AG04449 (cell line): ENCODE measurements at regions of chr19 and their contacts with region 1.

Region 1: DNA sequence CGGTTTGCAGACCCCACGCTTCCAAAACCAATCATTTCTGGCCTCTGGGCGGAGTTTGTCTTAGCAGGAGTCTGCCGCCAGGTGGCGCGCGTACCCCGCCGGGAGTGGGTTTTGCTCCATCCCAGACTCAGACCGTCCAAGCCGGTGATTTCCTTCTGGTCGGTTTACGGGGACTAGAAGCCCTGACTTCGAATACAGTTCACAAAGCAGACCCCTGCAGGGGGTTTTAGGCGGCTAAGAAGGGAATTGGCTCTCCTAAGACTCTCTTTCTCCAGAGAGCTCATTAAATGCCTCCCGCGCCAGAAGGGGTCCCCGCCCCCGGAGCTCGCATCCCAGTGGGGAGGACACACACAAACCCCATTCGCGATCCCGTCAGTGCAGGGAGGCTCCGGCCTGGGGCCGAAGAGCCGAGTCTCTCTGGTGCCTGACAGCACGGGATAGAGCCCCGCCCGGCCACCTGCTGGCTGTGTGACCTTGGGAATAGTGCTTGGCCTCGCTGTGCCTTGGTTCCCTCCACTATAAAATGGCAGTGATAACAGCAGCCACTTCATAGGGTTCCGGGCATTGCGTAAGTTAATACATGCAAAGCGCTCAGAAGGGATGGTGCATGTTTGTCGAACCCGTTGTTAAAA is 8.6 kb upstream of the NUP62 start:
- DNase-seq: no peak
- H3K4me3 ChIP-seq: peak overlapping the region; percentile 38
- CTCF ChIP-seq: peak; percentile 96

Region 2: GRCh38 chr19:49877020-49877878 is 60.6 kb before region 1 on chr19 and contains the starts of genes AKT1S1 and TBC1D17:
- CTCF ChIA-PET with region 1: no interaction called
- POLR2A ChIA-PET with region 1: no interaction called
- DNase-seq: peak; percentile 100
- H3K4me3 ChIP-seq: peak within 1 kb of the TSS; percentile 100
- CTCF ChIP-seq: no peak

Region 3: GRCh38 chr19:49954079-49954829 is 16.4 kb after region 1 on chr19:
- CTCF ChIA-PET with region 1: interaction called, 32 read pairs
- POLR2A ChIA-PET with region 1: no interaction called
- DNase-seq: no peak
- H3K4me3 ChIP-seq: peak overlapping the region; percentile 6; the same call in 1 of the 2 replicates
- CTCF ChIP-seq: no peak

Region 4: DNA sequence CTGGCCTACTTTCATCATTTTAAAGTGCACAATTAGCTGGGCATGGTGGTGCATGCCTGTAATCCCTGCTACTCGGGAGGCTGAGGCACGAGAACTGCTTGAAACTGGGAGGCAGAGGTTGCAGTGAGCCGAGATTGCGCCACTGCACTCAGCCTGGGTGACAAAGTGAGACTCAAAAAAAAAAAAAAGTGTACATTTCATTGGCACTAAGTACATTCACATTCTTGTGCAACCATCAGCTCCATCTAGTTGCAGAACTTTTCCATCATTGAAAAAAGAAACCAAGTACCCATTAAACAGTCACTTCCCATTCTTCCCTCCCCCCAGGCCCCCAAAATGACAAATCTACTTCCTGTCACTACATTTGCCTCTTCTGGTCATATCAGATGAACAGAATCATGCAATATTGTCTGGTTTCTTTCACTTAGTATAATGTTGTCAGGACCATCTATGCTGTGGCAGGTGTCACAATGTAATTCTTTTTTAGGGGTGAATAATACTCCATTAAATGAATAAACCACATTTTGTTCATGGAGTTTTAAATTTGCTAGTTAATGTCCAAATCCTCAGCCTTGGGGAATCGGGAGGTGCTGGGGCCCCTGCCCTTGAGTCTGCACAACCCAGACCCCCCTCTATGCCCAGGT is 30.5 kb after region 1 on chr19:
- CTCF ChIA-PET with region 1: interaction called, 12 read pairs
- POLR2A ChIA-PET with region 1: no interaction called
- DNase-seq: no peak
- H3K4me3 ChIP-seq: no peak overlapping the region
- CTCF ChIP-seq: no peak

Region 5: DNA sequence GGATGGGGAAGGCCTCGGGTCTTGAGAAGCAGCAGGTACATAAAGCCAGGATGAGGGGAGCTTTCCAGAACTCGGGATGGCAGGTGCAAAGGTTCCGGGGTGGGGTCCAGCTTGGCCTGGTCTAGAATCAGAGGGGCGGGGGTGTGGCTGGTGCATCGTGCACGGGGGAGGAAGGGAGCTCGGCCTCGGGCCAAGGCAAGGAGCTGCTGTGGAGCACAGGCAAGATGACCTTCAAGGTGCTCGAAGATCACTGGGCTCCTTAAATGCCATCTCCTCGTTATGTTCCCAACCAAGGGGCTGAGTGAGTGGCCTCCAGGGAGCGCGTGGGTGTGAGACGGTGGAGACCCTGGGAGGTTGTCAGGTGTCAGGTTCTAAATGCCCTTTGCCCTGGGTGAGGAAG is 39.2 kb after region 1 on chr19:
- CTCF ChIA-PET with region 1: interaction called, 72 read pairs
- POLR2A ChIA-PET with region 1: no interaction called
- DNase-seq: no peak
- H3K4me3 ChIP-seq: no peak overlapping the region
- CTCF ChIP-seq: no peak

Region 6: DNA sequence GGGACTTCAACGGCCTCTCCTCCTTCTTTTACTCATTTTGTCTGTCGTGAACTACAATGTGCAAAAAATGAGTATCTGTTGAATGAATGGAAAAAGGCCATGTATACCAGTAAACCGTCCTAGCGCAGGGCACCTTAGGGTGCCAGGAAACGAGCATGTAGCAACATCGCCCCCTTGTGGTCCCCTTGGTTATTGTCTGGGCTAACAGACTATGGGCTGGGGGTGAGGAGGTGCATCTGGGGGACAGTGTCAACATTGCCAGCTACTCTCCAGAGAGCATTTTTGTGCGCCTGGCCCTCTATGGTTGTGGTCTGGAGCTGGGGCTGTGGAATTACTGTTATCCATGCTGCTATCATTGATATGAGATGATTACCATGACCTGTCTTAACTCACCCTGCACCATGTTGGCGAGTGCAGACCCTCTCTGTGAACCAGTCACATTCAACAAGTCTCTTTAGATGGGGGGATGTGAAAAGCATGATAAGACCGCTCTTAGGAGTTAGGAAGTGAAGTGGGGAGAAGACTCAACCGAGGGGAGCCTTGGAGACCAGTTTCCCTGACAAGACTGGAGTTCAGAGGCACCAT is 45.9 kb after region 1 on chr19:
- CTCF ChIA-PET with region 1: interaction called, 72 read pairs
- POLR2A ChIA-PET with region 1: no interaction called
- DNase-seq: no peak
- H3K4me3 ChIP-seq: no peak overlapping the region
- CTCF ChIP-seq: peak; percentile 78

Region 7: DNA sequence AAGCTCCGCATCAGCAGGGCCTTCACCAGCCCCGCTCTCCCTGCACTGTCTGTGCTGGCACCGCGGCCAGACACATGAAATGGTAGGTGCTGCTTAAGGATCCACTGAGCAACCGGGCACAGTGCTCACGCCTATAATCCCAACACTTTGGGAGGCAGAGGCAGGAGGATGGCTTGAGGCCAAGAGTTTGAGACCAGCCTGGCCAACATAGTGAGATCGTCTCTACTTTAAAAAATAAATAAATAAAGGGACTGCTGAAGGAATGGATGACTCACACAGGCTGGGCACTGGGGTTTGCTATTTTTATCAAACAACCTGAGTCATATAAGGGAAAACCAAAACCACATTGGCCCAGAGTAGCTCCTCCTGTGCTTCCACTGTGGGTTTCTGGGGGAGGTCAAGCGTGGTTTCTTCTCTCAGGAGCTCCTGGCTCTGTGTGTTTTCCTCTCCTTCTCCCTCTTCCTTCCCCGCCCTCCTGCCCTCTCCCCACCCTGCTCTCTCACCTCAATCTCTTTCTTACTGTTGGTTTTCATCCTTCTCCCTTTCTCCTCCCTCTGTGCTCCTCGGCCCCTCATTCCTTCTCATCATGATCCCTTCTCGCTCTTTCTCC is 66.0 kb after region 1 on chr19:
- CTCF ChIA-PET with region 1: interaction called, 12 read pairs
- POLR2A ChIA-PET with region 1: no interaction called
- DNase-seq: peak; percentile 58
- H3K4me3 ChIP-seq: no peak overlapping the region
- CTCF ChIP-seq: no peak

Region 8: DNA sequence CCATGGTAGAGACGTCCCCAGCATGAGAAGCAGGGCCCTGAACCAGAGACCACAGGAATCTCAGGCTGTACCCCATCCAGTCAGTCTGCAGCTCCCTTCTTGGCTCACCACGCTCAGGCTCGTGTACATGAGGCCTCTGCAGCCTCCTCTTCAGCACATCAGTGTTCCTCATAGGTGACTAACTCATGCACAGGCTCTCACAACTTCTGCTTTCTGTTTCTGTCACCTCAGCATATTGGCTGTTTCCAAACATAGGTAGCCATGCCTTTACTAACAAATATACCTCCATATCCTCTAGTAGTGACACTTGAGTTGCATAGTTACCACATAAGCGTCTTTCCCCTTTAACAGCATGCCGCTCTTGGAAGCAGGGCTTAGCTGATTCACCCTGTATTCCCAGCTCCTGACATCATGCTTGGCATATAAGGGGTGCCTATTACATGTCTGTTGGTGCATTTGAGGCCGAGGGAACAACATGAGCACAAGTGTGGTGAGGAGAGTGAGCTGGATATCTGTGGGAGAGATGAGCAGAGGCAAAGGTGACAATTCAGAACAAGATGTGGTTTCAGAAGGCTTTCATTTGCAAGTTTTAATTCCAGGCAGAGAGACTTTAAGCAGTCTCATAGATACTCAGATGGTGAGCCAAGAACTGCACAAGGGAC is 104.6 kb after region 1 on chr19:
- CTCF ChIA-PET with region 1: no interaction called
- POLR2A ChIA-PET with region 1: no interaction called
- DNase-seq: no peak
- H3K4me3 ChIP-seq: no peak overlapping the region
- CTCF ChIP-seq: no peak